AG04449 (cell line): ENCODE measurements at regions of chr2 and their contacts with region 1.

Region 1: DNA sequence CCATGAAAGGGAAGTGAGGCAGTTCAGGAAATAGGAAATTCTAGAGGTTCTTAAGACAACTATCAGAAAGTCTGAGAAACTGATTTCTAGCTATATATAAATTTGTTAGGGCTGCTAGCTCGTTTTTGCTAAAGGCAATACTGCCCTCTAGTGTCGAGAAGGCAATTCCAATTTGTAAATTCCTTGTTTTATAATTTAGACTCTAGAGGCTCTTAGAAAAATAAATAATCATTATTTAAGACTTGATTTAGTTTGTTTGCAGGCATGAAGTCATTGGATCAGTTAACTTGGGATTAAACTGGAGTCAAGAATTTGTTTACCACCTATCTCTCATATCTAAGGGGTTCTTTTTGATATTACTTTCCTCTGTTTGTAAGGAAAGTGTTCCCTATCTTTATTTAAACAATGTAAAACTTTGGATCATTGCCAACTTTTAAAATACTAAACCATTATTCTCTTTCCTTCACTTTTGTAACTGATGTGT is 66.2 kb downstream of the ACVR2A start:
- DNase-seq: peak; percentile 16
- H3K4me3 ChIP-seq: no peak overlapping the region
- CTCF ChIP-seq: peak; percentile 20

Region 2: GRCh38 chr2:146734042-146734820 is 1176.8 kb before region 1 on chr2:
- CTCF ChIA-PET with region 1: interaction called, 19 read pairs
- POLR2A ChIA-PET with region 1: no interaction called
- DNase-seq: no peak
- H3K4me3 ChIP-seq: no peak overlapping the region
- CTCF ChIP-seq: no peak

Region 3: GRCh38 chr2:147045113-147045512 is 865.9 kb before region 1 on chr2:
- CTCF ChIA-PET with region 1: interaction called, 24 read pairs
- POLR2A ChIA-PET with region 1: no interaction called
- DNase-seq: no peak
- H3K4me3 ChIP-seq: no peak overlapping the region
- CTCF ChIP-seq: peak; percentile 28

Region 4: DNA sequence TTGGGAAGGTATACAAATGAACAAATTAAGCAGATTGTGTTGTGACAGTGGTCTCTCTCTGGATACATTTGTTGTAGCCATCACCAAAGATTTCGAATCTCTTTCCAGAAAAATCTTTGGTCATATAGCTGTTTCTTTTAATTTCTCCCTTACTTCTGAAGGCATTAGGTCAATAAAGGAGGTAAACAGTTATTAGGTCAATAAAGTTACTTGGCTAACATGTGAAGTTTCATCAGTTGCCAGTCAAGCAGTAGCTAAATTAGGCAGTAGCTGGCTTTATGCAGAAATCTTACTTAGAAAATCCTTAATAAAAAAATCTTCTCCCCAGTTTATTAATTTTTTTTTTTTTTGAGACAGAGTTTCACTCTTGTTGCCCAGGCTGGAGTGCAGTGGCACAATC is 225.4 kb after region 1 on chr2:
- CTCF ChIA-PET with region 1: no interaction called
- POLR2A ChIA-PET with region 1: no interaction called
- DNase-seq: no peak
- H3K4me3 ChIP-seq: no peak overlapping the region
- CTCF ChIP-seq: no peak